Endothelial cell of umbilical vein (primary cell): ENCODE measurements at regions of chr3 and their contacts with region 1.

Region 1: GRCh38 chr3:8769088-8769822 is at the start of gene OXTR:
- DNase-seq: peak; percentile 69
- H3K4me3 ChIP-seq: peak within 1 kb of the TSS in 1 of 3 experiments; percentile 9
- H3K27ac ChIP-seq: no peak within 1 kb of the TSS
- H3K4me1 ChIP-seq: peaks cover 16% of the 10 kb centered on the region
- H3K27me3 ChIP-seq: peaks cover 24 to 28% of the 10 kb centered on the region in 2 experiments
- CTCF ChIP-seq: peak; percentile 99
- POLR2A ChIP-seq: no peak
- total RNA-seq, gene OXTR: 0.40 and 0.67 TPM in 2 replicates

Region 2: GRCh38 chr3:8663177-8664061 is 105.8 kb before region 1 on chr3:
- CTCF ChIA-PET with region 1: interaction called, 16 read pairs
- POLR2A ChIA-PET with region 1: no interaction called
- dilution Hi-C with region 1: no loop called
- intact Hi-C with region 1: loop called (anchors 5 kb)
- DNase-seq: peak; percentile 66
- H3K4me3 ChIP-seq: no peak overlapping the region
- H3K27ac ChIP-seq: no peak overlapping the region
- H3K4me1 ChIP-seq: peaks cover 4% of the 10 kb centered on the region
- H3K27me3 ChIP-seq: peaks cover 0 to 8% of the 10 kb centered on the region in 2 experiments
- CTCF ChIP-seq: peak; percentile 52 to 67
- POLR2A ChIP-seq: no peak

Region 3: GRCh38 chr3:8755563-8756237 is 13.6 kb before region 1 on chr3:
- CTCF ChIA-PET with region 1: interaction called, 15 read pairs
- POLR2A ChIA-PET with region 1: no interaction called
- dilution Hi-C with region 1: no loop called
- intact Hi-C with region 1: no loop called
- DNase-seq: no peak
- H3K4me3 ChIP-seq: no peak overlapping the region
- H3K27ac ChIP-seq: no peak overlapping the region
- H3K4me1 ChIP-seq: no peaks in the 10 kb centered on the region
- H3K27me3 ChIP-seq: no peaks in the 10 kb centered on the region
- CTCF ChIP-seq: peak; percentile 12 to 13
- POLR2A ChIP-seq: no peak

Region 4: GRCh38 chr3:8869613-8870012 is 100.4 kb after region 1 on chr3:
- CTCF ChIA-PET with region 1: interaction called, 6 read pairs
- POLR2A ChIA-PET with region 1: no interaction called
- dilution Hi-C with region 1: no loop called
- intact Hi-C with region 1: loop called (anchors 2 kb)
- DNase-seq: peak; percentile 71
- H3K4me3 ChIP-seq: no peak overlapping the region
- H3K27ac ChIP-seq: peak overlapping the region; percentile 71
- H3K4me1 ChIP-seq: peaks cover 23% of the 10 kb centered on the region
- H3K27me3 ChIP-seq: no peaks in the 10 kb centered on the region
- CTCF ChIP-seq: no peak
- POLR2A ChIP-seq: no peak

Region 5: DNA sequence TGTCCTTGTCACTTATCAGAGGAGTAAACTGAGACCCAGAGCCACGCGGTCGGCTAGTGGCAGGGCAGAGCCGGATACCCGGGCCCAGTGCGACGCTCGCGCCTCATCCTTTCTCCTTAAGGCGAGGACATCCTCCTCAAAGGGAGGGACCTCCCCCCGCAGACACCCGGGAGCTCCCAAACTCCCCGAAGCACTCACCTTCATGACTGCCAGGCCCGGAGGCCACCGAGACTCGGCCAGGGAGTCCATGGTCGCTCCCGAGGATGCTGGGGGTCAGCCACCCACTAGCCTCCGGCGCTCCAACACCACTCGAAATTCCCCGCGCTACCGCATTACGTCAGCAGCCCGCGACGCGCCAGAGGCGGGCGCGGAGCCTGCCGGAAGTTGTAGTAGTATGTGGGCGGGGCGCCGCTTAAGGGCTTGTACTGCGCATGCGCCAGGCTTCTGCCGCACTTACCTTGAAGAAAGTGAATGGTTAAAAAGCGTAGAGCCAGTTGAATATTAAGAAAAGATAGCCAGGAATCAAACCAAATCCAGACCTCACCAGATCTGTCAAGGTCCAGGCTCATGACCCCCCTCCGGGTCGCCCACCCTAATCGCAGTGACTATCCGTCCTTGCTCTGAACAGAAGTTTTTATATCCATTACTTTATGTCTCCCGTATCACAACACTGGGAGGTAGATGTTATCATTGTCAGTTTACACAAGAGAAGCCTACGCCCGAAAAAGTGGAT is 194.0 kb after region 1 on chr3 and contains the start of gene RAD18:
- CTCF ChIA-PET with region 1: interaction called, 21 read pairs
- POLR2A ChIA-PET with region 1: no interaction called
- dilution Hi-C with region 1: no loop called
- intact Hi-C with region 1: loop called (anchors 2 kb)
- DNase-seq: peak; percentile 91
- H3K4me3 ChIP-seq: peak within 1 kb of the TSS; percentile 74 to 92 (median 91)
- H3K27ac ChIP-seq: peak within 1 kb of the TSS; percentile 67
- H3K4me1 ChIP-seq: peaks cover 29% of the 10 kb centered on the region
- H3K27me3 ChIP-seq: peaks cover 0 to 2% of the 10 kb centered on the region in 2 experiments
- CTCF ChIP-seq: no peak
- POLR2A ChIP-seq: peak; percentile 70
- total RNA-seq, gene RAD18: 16.7 and 23.8 TPM in 2 replicates

Region 6: GRCh38 chr3:9302425-9303181 is 533.3 kb after region 1 on chr3:
- CTCF ChIA-PET with region 1: interaction called, 23 read pairs
- POLR2A ChIA-PET with region 1: no interaction called
- dilution Hi-C with region 1: no loop called
- intact Hi-C with region 1: loop called (anchors 1 kb)
- DNase-seq: peak; percentile 79
- H3K4me3 ChIP-seq: no peak overlapping the region
- H3K27ac ChIP-seq: no peak overlapping the region
- H3K4me1 ChIP-seq: no peaks in the 10 kb centered on the region
- H3K27me3 ChIP-seq: peaks cover 0 to 4% of the 10 kb centered on the region in 2 experiments
- CTCF ChIP-seq: peak; percentile 88 to 89
- POLR2A ChIP-seq: no peak